Motor neuron (in vitro differentiated cells): ENCODE measurements at regions of chr11 and their contacts with region 1.

Region 1: DNA sequence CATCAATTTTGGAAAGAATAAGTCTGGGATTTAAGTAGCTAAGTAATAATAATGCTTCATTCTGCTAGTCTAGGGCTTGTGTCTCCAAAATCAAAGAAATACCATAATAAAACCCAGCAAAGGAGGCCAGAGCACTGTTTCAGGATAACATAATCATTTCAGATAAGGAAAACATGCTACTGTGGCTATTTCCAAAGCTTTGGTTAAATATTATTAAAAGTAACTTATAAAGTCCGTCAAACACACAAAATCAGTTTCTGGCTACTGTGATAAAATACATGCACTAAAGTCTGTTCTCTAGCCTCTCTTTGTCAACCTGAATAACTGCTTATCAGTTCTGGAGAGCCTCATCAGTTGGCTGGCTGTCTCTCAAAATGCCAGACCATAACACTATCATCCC is 1.5 kb upstream of the OR6T1 start:
- ATAC-seq: no peak
- H3K4me3 ChIP-seq: no peak overlapping the region
- H3K27ac ChIP-seq: no peak overlapping the region
- H3K4me1 ChIP-seq: no peaks in the 10 kb centered on the region

Region 2: GRCh38 chr11:123719452-123719851 is 225.7 kb before region 1 on chr11:
- in situ Hi-C with region 1: no loop called
- ATAC-seq: peak in 3 of 8 experiments; percentile 32 to 86 (median 62)
- H3K4me3 ChIP-seq: no peak overlapping the region
- H3K27ac ChIP-seq: no peak overlapping the region
- H3K4me1 ChIP-seq: peaks cover 0 to 8% of the 10 kb centered on the region in 2 donors

Region 3: DNA sequence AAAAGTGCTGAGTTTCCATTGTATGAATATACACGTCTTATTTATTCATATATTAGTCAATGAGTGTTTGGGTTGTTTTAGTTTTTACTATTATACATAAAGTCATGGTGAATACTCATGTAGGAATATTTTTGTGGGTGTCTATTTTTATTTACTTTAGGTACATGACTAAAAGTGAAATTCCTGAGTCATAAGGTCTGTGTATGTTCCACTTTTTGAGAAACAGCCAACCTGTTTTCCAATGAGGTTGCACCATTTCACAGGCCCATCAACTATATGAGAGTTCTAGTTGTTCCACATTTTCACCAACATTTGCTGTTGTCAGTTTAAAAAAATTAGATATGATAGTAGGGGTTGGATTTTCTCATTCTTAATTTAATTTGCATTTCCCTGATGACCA is 184.2 kb before region 1 on chr11:
- in situ Hi-C with region 1: loop called in 1 of 9 experiments (anchors 25 kb)
- ATAC-seq: no peak
- H3K4me3 ChIP-seq: no peak overlapping the region
- H3K27ac ChIP-seq: no peak overlapping the region
- H3K4me1 ChIP-seq: no peaks in the 10 kb centered on the region

Region 4: DNA sequence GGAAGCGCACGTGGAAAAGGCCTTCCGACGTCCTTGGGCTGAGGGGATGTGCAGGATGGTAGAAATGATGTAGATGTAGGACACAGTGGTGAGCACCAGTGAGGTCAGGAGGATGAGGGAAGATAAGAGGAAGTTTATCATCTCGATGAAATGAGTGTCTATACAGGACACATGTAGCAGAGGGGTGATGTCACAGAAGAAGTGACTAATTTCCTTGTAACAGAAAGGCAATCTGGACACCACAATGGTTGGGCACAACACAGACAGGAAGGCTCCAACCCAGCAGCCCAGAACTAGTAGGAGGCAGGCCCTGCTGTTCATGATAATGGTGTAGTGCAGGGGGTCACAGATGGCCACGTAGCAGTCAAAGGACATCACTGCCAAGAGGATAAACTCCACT is 104.0 kb before region 1 on chr11:
- in situ Hi-C with region 1: loop called in 1 of 9 experiments (anchors 25 kb)
- ATAC-seq: peak in 2 of 8 experiments; percentile 74 to 95
- H3K4me3 ChIP-seq: no peak overlapping the region
- H3K27ac ChIP-seq: no peak overlapping the region
- H3K4me1 ChIP-seq: no peaks in the 10 kb centered on the region

Region 5: DNA sequence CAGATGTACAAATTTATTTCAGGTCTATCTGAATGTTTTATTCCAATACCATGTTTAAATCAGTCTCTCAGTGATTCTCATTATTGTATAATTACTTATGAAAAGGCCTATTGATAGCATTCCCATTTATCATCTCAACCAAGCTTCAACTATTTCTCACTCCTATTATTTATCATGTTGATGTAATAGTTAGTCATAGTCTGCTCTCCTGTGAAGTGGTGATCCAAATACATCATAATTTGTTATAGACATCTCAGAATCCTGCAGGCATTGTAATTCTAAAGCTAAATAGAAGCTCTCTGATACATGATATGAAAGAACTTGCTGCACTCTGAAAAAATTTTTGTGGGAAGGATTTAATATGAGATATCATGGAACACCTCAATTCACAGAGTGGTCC is 274.0 kb after region 1 on chr11:
- in situ Hi-C with region 1: no loop called
- ATAC-seq: peak in 1 of 8 experiments; percentile 27
- H3K4me3 ChIP-seq: no peak overlapping the region
- H3K27ac ChIP-seq: no peak overlapping the region
- H3K4me1 ChIP-seq: no peaks in the 10 kb centered on the region